Activated CD4-positive, alpha-beta T cell treated with anti-CD3 and anti-CD28 coated beads for 36 hours (primary cell): ENCODE measurements at regions of chr19 and their contacts with region 1.

Region 1: GRCh38 chr19:35347171-35347929 is at the start of gene FFAR1:
- DNase-seq: peak; percentile 85
- ATAC-seq: peak; percentile 74
- H3K4me3 Mint-ChIP-seq: peak within 1 kb of the TSS; percentile 67
- H3K27ac Mint-ChIP-seq: peak within 1 kb of the TSS; percentile 99
- H3K4me1 Mint-ChIP-seq: peaks cover 36% of the 10 kb centered on the region
- H3K27me3 Mint-ChIP-seq: peaks cover 3% of the 10 kb centered on the region
- total RNA-seq, gene FFAR1: 0.23 to 0.35 TPM

Region 2: DNA sequence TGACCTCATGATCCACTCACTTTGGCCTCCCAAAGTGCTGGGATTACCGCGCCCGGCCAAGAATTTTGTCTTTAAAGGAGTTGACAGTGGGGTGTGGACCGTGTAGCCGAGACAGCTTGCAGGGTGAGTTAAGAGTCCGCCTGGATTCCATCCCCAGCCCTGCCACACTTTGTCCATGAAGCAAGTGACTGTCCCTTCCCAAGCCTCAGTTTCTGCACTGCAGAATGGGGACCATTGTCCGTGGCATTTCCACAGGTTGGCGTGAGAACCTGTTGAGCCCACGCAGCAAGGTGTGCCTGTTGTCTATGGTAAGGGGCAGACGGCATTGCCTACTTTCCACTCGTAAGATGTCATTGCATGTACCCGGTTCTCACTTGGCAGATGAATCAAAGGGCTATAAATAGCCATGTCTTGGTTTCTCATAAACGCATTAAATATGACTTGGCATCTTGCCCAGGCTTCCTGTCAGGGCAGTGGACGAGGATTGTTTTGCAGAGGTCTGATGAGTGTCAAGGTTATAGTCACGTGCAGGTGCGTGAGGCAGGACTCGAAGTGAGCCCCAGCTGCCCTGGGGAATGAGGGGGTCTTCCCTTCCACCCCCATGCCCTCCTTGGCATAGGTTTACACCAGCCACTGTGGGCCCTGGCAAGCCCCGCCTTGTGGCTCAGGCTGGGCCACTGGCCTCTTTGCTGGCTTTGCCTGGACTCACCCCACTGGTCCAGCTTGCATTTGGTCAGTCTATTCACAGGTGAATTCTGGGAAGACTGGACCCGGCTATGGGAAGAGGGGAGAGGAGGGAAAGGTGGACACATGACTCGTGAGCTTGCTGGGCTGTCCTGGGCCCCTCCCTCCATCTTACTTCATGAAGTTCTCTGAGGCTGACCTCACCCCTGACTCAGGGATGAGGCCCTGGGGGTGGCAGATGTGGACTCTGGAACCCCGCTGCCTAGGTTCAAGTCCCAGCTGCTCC is 133.4 kb before region 1 on chr19:
- CTCF ChIA-PET with region 1: no interaction called
- POLR2A ChIA-PET with region 1: no interaction called
- intact Hi-C with region 1: loop called (anchors 1 kb)
- DNase-seq: peak; percentile 88
- ATAC-seq: peak; percentile 67
- H3K4me3 Mint-ChIP-seq: peak overlapping the region; percentile 41
- H3K27ac Mint-ChIP-seq: peak overlapping the region; percentile 96
- H3K4me1 Mint-ChIP-seq: peaks cover 65% of the 10 kb centered on the region
- H3K27me3 Mint-ChIP-seq: no peaks in the 10 kb centered on the region

Region 3: GRCh38 chr19:35332817-35333216 is 14.5 kb before region 1 on chr19:
- CTCF ChIA-PET with region 1: interaction called, 12 read pairs
- POLR2A ChIA-PET with region 1: interaction called, 3 read pairs
- intact Hi-C with region 1: no loop called
- DNase-seq: peak; percentile 75
- ATAC-seq: peak; percentile 92
- H3K4me3 Mint-ChIP-seq: peak overlapping the region; percentile 12
- H3K27ac Mint-ChIP-seq: peak overlapping the region; percentile 51
- H3K4me1 Mint-ChIP-seq: peaks cover 28% of the 10 kb centered on the region
- H3K27me3 Mint-ChIP-seq: peaks cover 3% of the 10 kb centered on the region

Region 4: DNA sequence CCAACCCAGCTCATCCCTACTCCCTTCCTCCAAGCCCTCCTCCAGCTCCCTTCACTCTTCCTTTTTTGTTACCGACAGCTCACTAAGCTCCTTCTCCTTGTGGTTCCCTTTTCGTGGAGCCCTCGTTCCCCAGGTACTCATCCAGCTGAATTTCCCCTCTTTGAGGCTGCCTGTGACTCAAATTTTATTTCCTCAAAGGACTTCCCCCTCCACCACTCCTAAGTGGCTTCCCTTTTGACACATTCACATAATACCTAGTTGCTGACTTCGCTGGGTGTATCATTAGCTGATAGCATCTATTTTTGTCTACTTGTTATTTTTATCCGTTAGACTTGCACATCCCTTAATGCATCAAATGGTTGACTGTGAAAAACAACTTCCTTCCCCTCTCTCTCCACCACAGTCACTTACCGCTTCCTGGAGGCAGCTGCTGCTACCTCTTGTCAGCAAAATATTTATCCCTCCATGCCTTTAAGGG is 115.2 kb after region 1 on chr19:
- CTCF ChIA-PET with region 1: interaction called, 54 read pairs
- POLR2A ChIA-PET with region 1: interaction called, 4 read pairs
- intact Hi-C with region 1: loop called in 1 of 2 experiments (anchors 1 kb)
- DNase-seq: peak; percentile 49
- ATAC-seq: peak; percentile 90
- H3K4me3 Mint-ChIP-seq: no peak overlapping the region
- H3K27ac Mint-ChIP-seq: peak overlapping the region; percentile 55
- H3K4me1 Mint-ChIP-seq: peaks cover 24% of the 10 kb centered on the region
- H3K27me3 Mint-ChIP-seq: no peaks in the 10 kb centered on the region

Region 5: GRCh38 chr19:35710784-35711723 is 363.7 kb after region 1 on chr19:
- CTCF ChIA-PET with region 1: no interaction called
- POLR2A ChIA-PET with region 1: no interaction called
- intact Hi-C with region 1: loop called in 1 of 2 experiments (anchors 1 kb)
- DNase-seq: peak; percentile 88
- ATAC-seq: peak; percentile 48
- H3K4me3 Mint-ChIP-seq: peak overlapping the region; percentile 56
- H3K27ac Mint-ChIP-seq: peak overlapping the region; percentile 100
- H3K4me1 Mint-ChIP-seq: peaks cover 43% of the 10 kb centered on the region
- H3K27me3 Mint-ChIP-seq: no peaks in the 10 kb centered on the region